Left cardiac atrium (tissue), 4 donors: ENCODE measurements at regions of chr7 and their contacts with region 1.

Region 1: GRCh38 chr7:50679218-50680007 is 103.3 kb downstream of the GRB10 start:
- DNase-seq: no peak
- ATAC-seq: peak; percentile 60 to 82

Region 2: DNA sequence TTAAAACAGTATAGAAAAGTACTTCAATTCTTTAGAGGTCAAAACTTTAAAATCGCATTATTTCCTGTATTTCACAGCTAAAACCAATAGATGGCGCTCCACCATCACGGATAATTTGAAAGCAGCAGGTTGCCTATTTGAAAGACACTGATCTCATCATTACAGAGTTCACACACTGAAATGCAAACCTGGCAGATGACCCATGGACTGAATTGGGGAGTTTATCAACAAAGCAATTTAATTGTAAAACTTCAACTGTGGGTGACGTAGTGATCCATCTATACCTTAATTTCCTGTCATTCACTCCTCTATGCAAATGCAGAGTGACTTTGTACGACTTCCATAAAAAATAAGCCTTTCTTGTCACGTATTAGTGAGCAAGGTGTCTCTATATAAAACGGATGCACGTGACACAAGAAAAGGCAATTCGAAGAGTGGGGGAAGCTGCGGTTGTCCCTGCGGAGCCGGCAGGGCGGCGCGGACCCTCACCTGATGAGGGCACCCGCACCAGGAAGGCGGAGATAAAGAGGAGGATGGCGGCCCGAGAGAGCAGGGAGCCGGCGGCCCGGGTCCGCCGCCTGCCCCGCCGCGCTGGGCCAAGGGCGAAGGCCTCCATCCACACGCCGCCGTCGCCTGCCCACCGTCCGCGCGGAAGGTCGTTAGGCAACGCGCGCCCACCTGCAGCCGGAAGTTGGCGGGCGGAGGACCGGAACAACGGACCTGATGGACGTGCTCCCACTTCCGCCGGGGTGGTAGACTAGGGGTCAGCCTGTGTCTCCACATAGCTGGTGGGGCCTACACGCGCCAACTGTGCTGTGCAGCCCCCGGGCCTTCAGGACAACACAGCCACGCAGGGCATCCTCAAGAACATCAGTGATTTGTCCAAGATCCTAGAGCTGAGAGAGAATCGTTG is 586.6 kb before region 1 on chr7 and contains the start of gene ZPBP:
- intact Hi-C with region 1: loop called in 1 of 2 experiments (anchors 10 kb)
- DNase-seq: peak; percentile 22
- ATAC-seq: peak; percentile 71 to 76
- total RNA-seq, gene ZPBP: not detected

Region 3: DNA sequence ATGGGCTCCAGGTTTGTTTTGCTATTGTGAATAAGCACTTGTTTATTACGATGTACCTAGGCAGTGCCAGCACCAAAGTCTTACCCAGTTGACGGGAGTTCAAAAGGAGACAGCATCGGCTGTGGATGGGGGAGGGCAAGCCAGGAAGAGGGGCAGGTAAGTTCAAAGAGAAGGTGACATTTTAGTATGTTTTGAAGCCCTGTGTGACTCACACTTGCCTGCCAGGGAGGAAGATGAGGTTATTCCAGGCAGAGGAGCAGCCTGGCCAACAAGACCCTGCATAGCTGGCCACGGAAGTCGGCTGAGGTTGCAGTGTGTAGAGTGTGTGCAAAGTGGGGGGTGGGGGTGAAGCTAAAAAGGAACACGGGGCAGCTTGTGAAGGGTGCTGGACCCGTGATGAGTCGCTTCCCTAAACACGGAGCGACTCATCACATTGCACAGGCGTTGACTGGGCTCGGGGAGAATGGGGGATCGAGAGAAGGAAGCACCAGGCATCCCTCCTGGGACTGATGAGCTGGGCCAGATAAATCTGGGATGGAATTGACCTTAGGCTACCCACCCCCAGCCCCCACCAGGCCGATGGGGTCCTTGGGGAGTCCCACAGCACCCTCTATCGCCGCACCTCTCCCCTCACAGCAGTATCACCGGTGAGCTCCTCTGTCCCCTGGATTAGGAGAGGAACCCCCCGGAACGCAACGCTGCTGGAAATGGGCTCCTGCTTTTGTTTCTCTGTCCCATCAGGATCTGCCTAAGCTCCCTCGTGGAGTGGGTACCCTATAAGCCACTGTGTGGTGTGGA is 472.8 kb before region 1 on chr7:
- intact Hi-C with region 1: loop called in 1 of 2 experiments (anchors 5 kb)
- DNase-seq: peak; percentile 39
- ATAC-seq: peak; percentile 32 to 54

Region 4: DNA sequence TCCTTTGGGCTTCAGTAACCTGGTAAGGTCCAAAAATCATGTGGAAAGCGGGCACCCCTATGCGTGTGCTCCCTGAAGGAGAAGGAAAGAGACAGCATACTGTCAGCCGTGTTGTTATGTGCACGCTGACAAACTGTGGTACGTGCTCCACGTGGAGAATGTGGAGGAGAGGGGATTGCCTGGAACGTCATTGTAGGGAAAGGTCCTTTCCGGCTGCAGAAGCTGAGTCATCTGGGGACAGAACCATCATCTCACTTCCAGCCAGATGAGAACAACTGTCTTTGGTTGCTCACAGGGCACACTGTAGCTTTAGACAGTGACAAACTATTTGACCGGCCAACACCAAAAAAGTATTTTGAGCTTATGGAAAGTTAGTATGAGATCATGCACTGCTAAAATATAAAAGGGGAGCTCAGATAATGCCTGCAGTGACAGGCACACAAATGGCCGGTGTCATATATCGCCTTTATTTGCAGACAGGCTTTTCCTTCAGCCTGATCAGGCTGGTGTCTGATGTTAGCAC is 142.1 kb after region 1 on chr7:
- intact Hi-C with region 1: no loop called
- DNase-seq: no peak
- ATAC-seq: peak; percentile 27 to 69